CD4-positive, alpha-beta T cell (primary cell): ENCODE measurements at regions of chr16 and their contacts with region 1.

Region 1: DNA sequence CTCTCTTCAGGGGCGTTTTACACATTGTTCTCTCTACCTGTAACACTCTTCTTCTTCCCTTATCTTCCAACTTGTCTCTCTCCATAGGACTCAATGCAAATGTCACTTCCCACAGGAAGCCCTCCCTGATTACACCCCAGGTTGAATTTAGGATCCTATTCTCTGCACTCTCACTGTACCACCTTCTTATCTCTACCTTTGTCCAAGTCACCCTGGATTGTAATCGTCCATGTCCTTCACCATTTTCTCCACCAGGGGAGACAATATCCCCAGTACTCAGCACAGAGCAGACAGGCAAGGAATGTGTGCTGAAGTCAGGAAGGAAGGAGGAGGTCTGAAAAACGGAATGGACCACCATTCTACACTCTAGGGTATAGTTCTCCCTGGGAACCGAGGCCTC is 14.1 kb downstream of the C16orf82 start:
- DNase-seq: peak in 2 of 14 experiments; percentile 19 to 20
- ATAC-seq: no peak
- H3K4me3 ChIP-seq: no peak overlapping the region
- H3K4me3 Mint-ChIP-seq: no peak overlapping the region
- H3K27ac ChIP-seq: no peak overlapping the region
- H3K27ac Mint-ChIP-seq: no peak overlapping the region
- H3K4me1 ChIP-seq: no peaks in the 10 kb centered on the region
- H3K4me1 Mint-ChIP-seq: no peaks in the 10 kb centered on the region
- H3K27me3 ChIP-seq: peaks cover 9 to 10% of the 10 kb centered on the region in 2 experiments
- H3K27me3 Mint-ChIP-seq: peaks cover 48% of the 10 kb centered on the region
- CTCF ChIP-seq: peak; percentile 39

Region 2: GRCh38 chr16:25606069-25606468 is 1474.8 kb before region 1 on chr16:
- CTCF ChIA-PET with region 1: no interaction called
- POLR2A ChIA-PET with region 1: no interaction called
- intact Hi-C with region 1: no loop called
- DNase-seq: no peak
- ATAC-seq: no peak
- H3K4me3 ChIP-seq: no peak overlapping the region
- H3K4me3 Mint-ChIP-seq: no peak overlapping the region
- H3K27ac ChIP-seq: no peak overlapping the region
- H3K27ac Mint-ChIP-seq: no peak overlapping the region
- H3K4me1 ChIP-seq: no peaks in the 10 kb centered on the region
- H3K4me1 Mint-ChIP-seq: no peaks in the 10 kb centered on the region
- H3K27me3 ChIP-seq: no peaks in the 10 kb centered on the region
- H3K27me3 Mint-ChIP-seq: peaks cover 11% of the 10 kb centered on the region
- CTCF ChIP-seq: no peak

Region 3: GRCh38 chr16:26550111-26550610 is 530.7 kb before region 1 on chr16:
- CTCF ChIA-PET with region 1: no interaction called
- POLR2A ChIA-PET with region 1: no interaction called
- intact Hi-C with region 1: no loop called
- DNase-seq: no peak
- ATAC-seq: no peak
- H3K4me3 ChIP-seq: no peak overlapping the region
- H3K4me3 Mint-ChIP-seq: no peak overlapping the region
- H3K27ac ChIP-seq: no peak overlapping the region
- H3K27ac Mint-ChIP-seq: no peak overlapping the region
- H3K4me1 ChIP-seq: no peaks in the 10 kb centered on the region
- H3K4me1 Mint-ChIP-seq: no peaks in the 10 kb centered on the region
- H3K27me3 ChIP-seq: no peaks in the 10 kb centered on the region
- H3K27me3 Mint-ChIP-seq: peaks cover 6% of the 10 kb centered on the region
- CTCF ChIP-seq: no peak

Region 4: GRCh38 chr16:27455700-27456099 is 374.8 kb after region 1 on chr16:
- CTCF ChIA-PET with region 1: no interaction called
- POLR2A ChIA-PET with region 1: no interaction called
- intact Hi-C with region 1: loop called in 1 of 2 experiments (anchors 5 kb)
- DNase-seq: peak in 3 of 14 experiments; percentile 21 to 38 (median 38)
- ATAC-seq: peak; percentile 43
- H3K4me3 ChIP-seq: no peak overlapping the region
- H3K4me3 Mint-ChIP-seq: peak overlapping the region; percentile 38
- H3K27ac ChIP-seq: no peak overlapping the region
- H3K27ac Mint-ChIP-seq: peak overlapping the region; percentile 50
- H3K4me1 ChIP-seq: peaks cover 52% of the 10 kb centered on the region
- H3K4me1 Mint-ChIP-seq: peaks cover 63% of the 10 kb centered on the region
- H3K27me3 ChIP-seq: no peaks in the 10 kb centered on the region
- H3K27me3 Mint-ChIP-seq: no peaks in the 10 kb centered on the region
- CTCF ChIP-seq: no peak